ENCODE measurements at regions of chr22 and their contacts with region 1.

Region 1: DNA sequence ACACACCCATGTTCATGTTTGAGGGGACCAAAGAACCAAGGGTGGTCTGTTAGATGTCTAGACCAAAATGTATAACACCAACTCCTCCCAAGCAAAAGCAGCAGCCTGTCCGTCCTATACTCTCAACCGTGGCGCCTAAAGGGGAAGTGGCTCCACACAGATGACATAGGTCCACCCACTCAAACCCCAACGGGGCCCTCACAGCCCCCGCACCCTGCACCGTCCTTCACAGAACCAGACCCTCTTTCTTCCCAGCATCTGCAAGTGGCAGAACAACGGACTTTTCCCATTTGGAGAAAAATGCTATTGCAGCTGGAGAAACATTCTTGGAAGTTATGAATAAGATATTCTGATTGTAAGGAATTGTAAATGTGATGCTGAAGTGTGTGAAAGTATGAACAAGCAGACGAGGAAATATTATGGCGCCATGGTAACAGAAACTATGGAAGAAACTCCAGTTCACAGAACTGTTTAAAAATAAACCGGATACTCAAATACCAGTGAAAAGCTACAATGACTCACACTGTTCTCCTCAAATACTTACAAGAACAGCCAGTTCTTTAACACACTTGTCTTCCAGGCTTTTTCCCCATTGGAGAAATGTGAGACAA is 76.5 kb upstream of the ARFGAP3 start:
- DNase-seq: no peak
- H3K4me3 Mint-ChIP-seq: peak overlapping the region; percentile 37
- H3K27ac Mint-ChIP-seq: peak overlapping the region; percentile 83
- H3K4me1 Mint-ChIP-seq: peaks cover 50% of the 10 kb centered on the region
- H3K27me3 Mint-ChIP-seq: no peaks in the 10 kb centered on the region

Region 2: DNA sequence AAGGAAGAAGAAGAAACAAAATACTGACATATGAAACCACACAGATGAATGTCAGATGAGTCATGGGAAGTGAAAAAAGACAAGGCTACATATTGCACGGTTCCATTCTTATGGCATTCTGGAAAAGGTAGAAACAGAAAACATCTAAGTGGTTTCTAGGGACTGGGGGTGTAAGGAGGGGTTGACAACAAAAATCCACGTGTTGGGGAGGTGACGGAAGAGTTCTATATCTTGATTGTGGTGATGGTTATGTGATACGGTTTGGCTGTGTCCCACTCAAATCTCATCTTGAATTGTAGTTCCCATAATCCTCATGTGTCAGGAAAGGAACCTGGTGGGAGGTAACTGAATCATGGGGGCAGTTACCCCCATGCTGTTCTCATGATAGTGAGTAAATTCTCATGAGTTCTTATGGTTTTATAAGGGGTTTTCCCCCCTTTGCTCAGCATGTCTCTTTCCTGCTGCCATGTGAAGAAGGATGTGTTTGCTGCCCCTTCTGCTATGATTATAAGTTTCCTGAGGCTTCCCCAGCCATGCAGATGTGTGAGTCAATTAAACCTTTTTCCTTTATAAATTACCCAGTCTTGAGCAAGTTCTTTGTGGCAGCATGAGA is 70.1 kb before region 1 on chr22:
- intact Hi-C with region 1: loop called (anchors 10 kb)
- DNase-seq: no peak
- H3K4me3 Mint-ChIP-seq: no peak overlapping the region
- H3K27ac Mint-ChIP-seq: peak overlapping the region; percentile 78
- H3K4me1 Mint-ChIP-seq: peaks cover 16% of the 10 kb centered on the region
- H3K27me3 Mint-ChIP-seq: no peaks in the 10 kb centered on the region

Region 3: GRCh38 chr22:42964994-42965699 is 31.6 kb after region 1 on chr22:
- intact Hi-C with region 1: loop called (anchors 2 kb)
- DNase-seq: no peak
- H3K4me3 Mint-ChIP-seq: no peak overlapping the region
- H3K27ac Mint-ChIP-seq: peak overlapping the region; percentile 31
- H3K4me1 Mint-ChIP-seq: peaks cover 43% of the 10 kb centered on the region
- H3K27me3 Mint-ChIP-seq: no peaks in the 10 kb centered on the region

Region 4: GRCh38 chr22:43001271-43002201 is 68.0 kb after region 1 on chr22:
- intact Hi-C with region 1: loop called (anchors 5 kb)
- DNase-seq: no peak
- H3K4me3 Mint-ChIP-seq: no peak overlapping the region
- H3K27ac Mint-ChIP-seq: peak overlapping the region; percentile 30
- H3K4me1 Mint-ChIP-seq: peaks cover 66% of the 10 kb centered on the region
- H3K27me3 Mint-ChIP-seq: no peaks in the 10 kb centered on the region

Region 5: GRCh38 chr22:43014869-43015676 is 81.5 kb after region 1 on chr22 and contains the start of gene PACSIN2:
- intact Hi-C with region 1: loop called (anchors 1 kb)
- DNase-seq: peak; percentile 99
- H3K4me3 Mint-ChIP-seq: peak within 1 kb of the TSS; percentile 91
- H3K27ac Mint-ChIP-seq: peak within 1 kb of the TSS; percentile 76
- H3K4me1 Mint-ChIP-seq: peaks cover 23% of the 10 kb centered on the region
- H3K27me3 Mint-ChIP-seq: peaks cover 6% of the 10 kb centered on the region
- total RNA-seq, gene PACSIN2: 30.8 and 32.5 TPM in 2 replicates

Measured in activated T-helper 2 cell treated with anti-CD3 and anti-CD28 coated beads, Interferon-gamma antibody, Interleukin-2, Interleukin-4, amounts not matched to agents 10 μg/mL and 5 μg/mL and 100 μg/mL, durations not matched to agents 14 hours and 24 hours and 36 hours (primary cell).